Activated CD4-positive, alpha-beta T cell treated with anti-CD3 and anti-CD28 coated beads for 36 hours (primary cell): ENCODE measurements at regions of chr2 and their contacts with region 1.

Region 1: GRCh38 chr2:168118733-168119514 is 128.5 kb downstream of the STK39 start:
- DNase-seq: no peak
- ATAC-seq: no peak
- H3K4me3 Mint-ChIP-seq: no peak overlapping the region
- H3K27ac Mint-ChIP-seq: no peak overlapping the region
- H3K4me1 Mint-ChIP-seq: no peaks in the 10 kb centered on the region
- H3K27me3 Mint-ChIP-seq: no peaks in the 10 kb centered on the region

Region 2: DNA sequence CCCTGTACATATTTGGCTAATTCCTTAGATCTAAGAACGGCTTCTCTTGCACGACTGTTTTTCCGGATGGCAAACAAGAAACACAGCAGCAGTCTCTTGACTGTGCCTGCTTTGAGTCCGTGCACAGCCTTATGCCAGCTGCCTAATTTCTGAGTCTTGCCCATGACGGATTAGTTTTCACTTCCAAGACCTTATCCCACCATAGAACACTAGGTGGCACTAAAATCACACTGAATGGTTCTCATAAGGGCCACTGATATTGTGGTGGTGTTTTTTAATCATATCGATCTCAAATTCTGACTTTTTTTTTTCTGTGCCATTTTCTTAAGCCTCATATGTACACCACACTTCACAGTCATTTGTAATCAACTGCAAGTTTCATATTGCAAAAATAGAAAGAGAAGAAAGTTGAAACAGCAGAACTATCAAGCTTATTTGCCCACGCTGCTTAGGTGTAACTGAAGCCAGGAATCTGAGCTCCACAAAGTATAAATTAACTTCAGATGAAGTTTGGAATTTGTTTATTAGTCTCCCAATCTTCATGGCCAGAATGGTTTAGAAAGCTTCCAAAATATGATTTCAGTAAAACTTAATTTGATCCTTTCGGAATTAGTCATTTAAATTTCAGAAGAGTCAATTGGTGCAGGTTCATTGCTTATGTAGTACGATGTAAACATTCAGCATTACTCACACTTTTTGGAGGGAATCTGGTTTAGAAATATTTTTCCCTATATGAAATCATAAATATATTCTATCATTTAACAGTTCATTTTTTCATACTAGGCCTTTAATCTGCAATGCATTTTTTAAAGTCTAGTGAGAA is 1579.4 kb before region 1 on chr2:
- CTCF ChIA-PET with region 1: interaction called, 12 read pairs
- POLR2A ChIA-PET with region 1: no interaction called
- intact Hi-C with region 1: loop called (anchors 2 kb)
- DNase-seq: peak; percentile 9
- ATAC-seq: peak; percentile 76
- H3K4me3 Mint-ChIP-seq: no peak overlapping the region
- H3K27ac Mint-ChIP-seq: no peak overlapping the region
- H3K4me1 Mint-ChIP-seq: peaks cover 2% of the 10 kb centered on the region
- H3K27me3 Mint-ChIP-seq: peaks cover 7% of the 10 kb centered on the region

Region 3: GRCh38 chr2:167862787-167863186 is 256.1 kb before region 1 on chr2:
- CTCF ChIA-PET with region 1: interaction called, 3 read pairs
- POLR2A ChIA-PET with region 1: no interaction called
- intact Hi-C with region 1: loop called (anchors 5 to 10 kb)
- DNase-seq: peak; percentile 28
- ATAC-seq: peak; percentile 87
- H3K4me3 Mint-ChIP-seq: no peak overlapping the region
- H3K27ac Mint-ChIP-seq: no peak overlapping the region
- H3K4me1 Mint-ChIP-seq: peaks cover 13% of the 10 kb centered on the region
- H3K27me3 Mint-ChIP-seq: peaks cover 14% of the 10 kb centered on the region

Region 4: DNA sequence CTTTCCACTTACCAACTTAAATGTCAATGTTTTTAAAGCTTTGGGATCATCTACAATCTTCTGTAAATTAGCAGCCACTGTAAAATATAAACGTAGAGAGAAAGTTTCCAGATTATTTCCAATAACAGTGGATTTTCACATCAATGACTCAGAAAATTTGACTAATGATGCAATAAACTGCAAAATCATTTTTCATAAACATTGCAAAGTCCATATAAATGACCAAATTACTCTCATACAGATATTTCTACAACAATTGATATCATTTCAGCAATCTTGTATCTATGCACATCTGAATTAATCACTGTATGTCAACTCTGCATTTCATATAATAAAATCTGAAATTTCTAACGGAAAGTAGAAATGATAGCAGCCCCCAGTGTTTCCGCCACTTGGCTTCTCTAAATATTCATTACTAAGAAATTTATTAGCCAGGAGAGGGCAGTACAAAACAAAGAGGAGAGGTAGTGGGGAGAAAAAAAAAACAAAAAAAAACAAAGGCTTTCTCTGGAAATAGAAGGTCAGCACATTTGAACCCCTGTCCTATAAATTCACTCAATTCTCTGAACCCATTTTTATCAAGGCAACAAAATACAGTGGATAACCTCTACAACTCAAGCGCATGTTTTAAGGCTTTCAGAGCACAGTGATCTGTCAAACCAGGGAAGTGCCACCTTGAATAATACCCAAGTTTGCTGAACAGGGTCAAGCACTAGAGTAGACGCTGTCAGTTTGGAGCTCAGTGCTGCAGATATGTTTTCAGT is 154.1 kb before region 1 on chr2:
- CTCF ChIA-PET with region 1: interaction called, 6 read pairs
- POLR2A ChIA-PET with region 1: no interaction called
- intact Hi-C with region 1: loop called (anchors 2 to 5 kb)
- DNase-seq: no peak
- ATAC-seq: no peak
- H3K4me3 Mint-ChIP-seq: no peak overlapping the region
- H3K27ac Mint-ChIP-seq: no peak overlapping the region
- H3K4me1 Mint-ChIP-seq: peaks cover 8% of the 10 kb centered on the region
- H3K27me3 Mint-ChIP-seq: no peaks in the 10 kb centered on the region

Region 5: GRCh38 chr2:168130346-168130745 is 11.4 kb after region 1 on chr2:
- CTCF ChIA-PET with region 1: interaction called, 47 read pairs
- POLR2A ChIA-PET with region 1: no interaction called
- intact Hi-C with region 1: no loop called
- DNase-seq: no peak
- ATAC-seq: no peak
- H3K4me3 Mint-ChIP-seq: no peak overlapping the region
- H3K27ac Mint-ChIP-seq: no peak overlapping the region
- H3K4me1 Mint-ChIP-seq: no peaks in the 10 kb centered on the region
- H3K27me3 Mint-ChIP-seq: no peaks in the 10 kb centered on the region

Region 6: GRCh38 chr2:168220965-168221819 is 102.3 kb after region 1 on chr2:
- CTCF ChIA-PET with region 1: no interaction called
- POLR2A ChIA-PET with region 1: no interaction called
- intact Hi-C with region 1: no loop called
- DNase-seq: no peak
- ATAC-seq: no peak
- H3K4me3 Mint-ChIP-seq: no peak overlapping the region
- H3K27ac Mint-ChIP-seq: no peak overlapping the region
- H3K4me1 Mint-ChIP-seq: peaks cover 43% of the 10 kb centered on the region
- H3K27me3 Mint-ChIP-seq: no peaks in the 10 kb centered on the region